Activated CD8-positive, alpha-beta T cell treated with anti-CD3 and anti-CD28 coated beads, Interleukin-2, amount 10 ng/mL, durations not matched to agents 7 days and 5 days (primary cell): ENCODE measurements at regions of chr6 and their contacts with region 1.

Region 1: DNA sequence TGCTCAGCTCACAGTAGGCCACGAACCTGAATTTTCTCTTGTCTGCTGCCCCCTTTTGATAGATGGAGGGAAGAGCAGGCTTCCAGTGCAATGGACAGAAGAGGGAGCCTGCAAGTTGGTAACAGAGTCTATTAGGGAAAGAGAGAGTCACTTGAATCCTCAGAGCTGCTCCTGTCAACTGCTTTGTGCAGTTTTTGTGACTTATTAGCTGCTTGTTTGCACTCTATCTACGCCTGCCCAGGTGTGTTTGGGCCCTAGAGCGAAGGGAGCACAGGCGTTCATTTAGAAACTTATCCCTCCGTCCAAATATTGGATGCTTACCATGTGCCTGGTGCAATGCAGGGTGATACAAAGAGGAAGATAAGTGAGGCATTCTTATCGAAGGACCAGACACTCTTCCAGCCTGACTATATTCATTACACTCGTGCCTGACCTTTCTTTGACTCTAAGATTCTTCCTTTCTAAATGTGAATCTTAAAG is 11.6 kb upstream of the SLC2A12 start:
- DNase-seq: peak; percentile 72
- ATAC-seq: peak; percentile 90
- H3K4me3 Mint-ChIP-seq: no peak overlapping the region
- H3K27ac Mint-ChIP-seq: no peak overlapping the region
- H3K4me1 Mint-ChIP-seq: no peaks in the 10 kb centered on the region
- H3K27me3 Mint-ChIP-seq: peaks cover 9% of the 10 kb centered on the region

Region 2: DNA sequence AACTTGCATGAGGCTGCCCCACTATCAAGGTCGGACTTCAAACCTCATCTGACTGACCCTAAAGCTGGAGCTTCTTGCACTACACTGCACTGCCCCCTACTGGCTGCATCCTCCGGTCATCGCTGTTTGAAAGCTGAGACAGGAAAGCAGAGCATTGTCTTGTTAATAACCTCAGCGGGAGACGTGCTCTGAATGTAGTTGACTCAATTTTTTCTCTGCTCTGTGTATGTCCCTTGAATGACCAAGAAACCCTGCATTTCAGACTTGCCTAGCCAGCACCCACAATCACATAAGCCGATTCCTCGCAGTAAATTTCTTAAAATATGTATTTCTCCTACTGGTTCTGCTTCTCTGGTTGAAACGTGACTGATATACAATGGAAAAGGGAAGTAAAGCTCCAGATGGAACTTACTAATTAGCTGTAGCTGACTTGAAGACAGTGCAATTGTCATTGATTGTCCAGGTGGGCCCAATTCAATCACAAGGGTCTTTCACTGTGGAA is 147.3 kb before region 1 on chr6:
- CTCF ChIA-PET with region 1: interaction called, 125 read pairs
- POLR2A ChIA-PET with region 1: no interaction called
- DNase-seq: peak; percentile 86
- ATAC-seq: peak; percentile 75
- H3K4me3 Mint-ChIP-seq: no peak overlapping the region
- H3K27ac Mint-ChIP-seq: no peak overlapping the region
- H3K4me1 Mint-ChIP-seq: peaks cover 9% of the 10 kb centered on the region
- H3K27me3 Mint-ChIP-seq: peaks cover 24% of the 10 kb centered on the region

Region 3: GRCh38 chr6:133973109-133973971 is 90.7 kb before region 1 on chr6:
- CTCF ChIA-PET with region 1: interaction called, 90 read pairs
- POLR2A ChIA-PET with region 1: interaction called, 4 read pairs
- DNase-seq: no peak
- ATAC-seq: peak; percentile 45
- H3K4me3 Mint-ChIP-seq: no peak overlapping the region
- H3K27ac Mint-ChIP-seq: no peak overlapping the region
- H3K4me1 Mint-ChIP-seq: peaks cover 17% of the 10 kb centered on the region
- H3K27me3 Mint-ChIP-seq: no peaks in the 10 kb centered on the region

Region 4: DNA sequence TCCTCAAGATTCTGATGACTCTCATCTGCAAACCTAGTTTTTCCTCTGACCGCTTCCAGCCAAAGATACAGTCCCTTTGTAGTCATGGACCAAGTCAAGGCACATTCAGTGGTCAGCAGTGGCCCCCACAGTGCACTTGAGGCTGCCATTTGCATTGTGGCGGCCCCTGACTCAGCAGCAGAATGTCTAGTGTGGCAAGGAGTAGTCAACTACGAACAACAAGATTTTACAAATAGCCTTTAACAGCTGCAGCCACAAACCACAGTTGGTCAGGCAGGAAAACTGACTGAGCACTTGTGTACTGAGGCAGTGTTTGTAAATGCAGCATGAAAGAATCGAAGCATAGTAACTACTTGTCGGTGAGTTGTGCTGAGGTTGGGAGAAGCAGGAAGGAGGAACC is 61.2 kb before region 1 on chr6:
- CTCF ChIA-PET with region 1: interaction called, 32 read pairs
- POLR2A ChIA-PET with region 1: no interaction called
- DNase-seq: no peak
- ATAC-seq: no peak
- H3K4me3 Mint-ChIP-seq: no peak overlapping the region
- H3K27ac Mint-ChIP-seq: no peak overlapping the region
- H3K4me1 Mint-ChIP-seq: no peaks in the 10 kb centered on the region
- H3K27me3 Mint-ChIP-seq: peaks cover 16% of the 10 kb centered on the region

Region 5: GRCh38 chr6:134074151-134075055 is 10.4 kb after region 1 on chr6:
- CTCF ChIA-PET with region 1: interaction called, 11 read pairs
- POLR2A ChIA-PET with region 1: no interaction called
- DNase-seq: no peak
- ATAC-seq: no peak
- H3K4me3 Mint-ChIP-seq: no peak overlapping the region
- H3K27ac Mint-ChIP-seq: no peak overlapping the region
- H3K4me1 Mint-ChIP-seq: peaks cover 13% of the 10 kb centered on the region
- H3K27me3 Mint-ChIP-seq: peaks cover 3% of the 10 kb centered on the region

Region 6: DNA sequence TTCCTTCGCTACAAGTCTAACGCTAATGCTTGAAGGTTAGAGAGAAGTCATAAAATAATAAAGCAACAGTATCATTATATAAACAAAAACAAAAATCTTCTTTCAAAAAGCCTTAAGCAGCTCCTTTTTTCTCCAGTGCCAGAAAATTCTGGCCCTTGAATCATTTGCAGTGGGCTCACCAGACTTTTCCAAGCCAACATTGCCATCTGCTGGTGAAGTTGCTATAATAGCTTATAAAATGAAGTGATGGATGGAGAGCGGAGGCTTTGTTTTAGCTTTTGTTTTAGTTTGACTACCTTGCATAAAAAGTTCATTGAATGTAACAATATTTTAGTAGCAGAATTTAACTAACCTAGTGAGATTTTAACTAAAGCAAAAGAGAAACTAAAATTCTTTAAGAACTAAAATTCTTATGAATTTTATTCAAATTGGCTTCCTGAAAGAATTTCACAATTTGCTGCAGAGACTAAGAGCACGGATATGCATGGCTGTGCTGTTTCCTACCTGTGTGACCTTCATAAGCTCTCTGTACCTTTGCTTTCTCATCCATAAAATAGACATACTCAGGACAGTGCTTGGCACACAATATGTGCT is 33.2 kb after region 1 on chr6:
- CTCF ChIA-PET with region 1: interaction called, 60 read pairs
- POLR2A ChIA-PET with region 1: no interaction called
- DNase-seq: peak; percentile 79
- ATAC-seq: peak; percentile 68
- H3K4me3 Mint-ChIP-seq: no peak overlapping the region
- H3K27ac Mint-ChIP-seq: no peak overlapping the region
- H3K4me1 Mint-ChIP-seq: peaks cover 6% of the 10 kb centered on the region
- H3K27me3 Mint-ChIP-seq: peaks cover 23% of the 10 kb centered on the region